MCF 10A (cell line): ENCODE measurements at regions of chr10 and their contacts with region 1.

Region 1: DNA sequence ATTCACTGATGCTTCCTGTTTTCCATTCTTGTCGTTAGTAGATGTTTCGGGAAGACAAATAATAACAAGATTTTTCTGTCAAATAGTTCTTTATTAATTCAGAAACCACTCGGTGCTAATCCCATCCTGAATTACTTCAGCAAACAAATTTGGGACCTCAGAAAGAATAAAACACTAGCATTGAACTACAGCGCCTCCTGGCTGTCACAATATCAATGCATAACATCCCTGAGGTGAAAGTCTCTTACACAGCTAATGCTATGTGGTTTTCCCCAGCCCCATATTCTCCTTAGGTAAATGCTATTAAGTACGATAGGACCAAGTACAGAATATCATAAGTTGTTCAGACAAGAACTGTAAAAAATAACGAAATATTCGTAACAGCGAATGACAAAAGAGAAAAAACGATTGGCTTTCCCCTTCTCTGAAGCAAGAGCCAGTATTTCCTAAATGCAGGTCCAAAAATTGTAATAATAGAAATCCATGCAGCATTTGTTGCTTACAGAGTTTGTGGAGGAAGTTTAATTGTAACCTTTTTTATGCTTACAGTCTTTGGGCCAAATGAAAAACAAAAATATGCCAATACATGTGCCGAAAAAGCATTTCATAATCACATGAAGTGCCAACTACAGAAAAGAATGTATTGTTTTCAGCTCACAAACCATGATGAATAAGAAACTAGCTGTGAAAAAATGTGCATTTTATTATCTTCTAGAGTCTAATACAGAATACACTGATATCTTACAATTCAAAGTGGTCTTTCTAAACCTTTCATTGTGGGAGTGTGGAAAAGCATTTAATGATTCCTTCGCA is 47.3 kb downstream of the MYPN start:
- DNase-seq: peak; percentile 80
- H3K4me3 Mint-ChIP-seq: no peak overlapping the region
- H3K27ac Mint-ChIP-seq: no peak overlapping the region
- H3K4me1 Mint-ChIP-seq: peaks cover 9% of the 10 kb centered on the region
- H3K27me3 Mint-ChIP-seq: no peaks in the 10 kb centered on the region
- CTCF ChIP-seq: peak; percentile 86

Region 2: GRCh38 chr10:67849331-67850011 is 307.1 kb before region 1 on chr10:
- CTCF ChIA-PET with region 1: interaction called, 23 read pairs
- POLR2A ChIA-PET with region 1: interaction called, 3 read pairs
- intact Hi-C with region 1: no loop called
- DNase-seq: peak; percentile 94
- H3K4me3 Mint-ChIP-seq: peak overlapping the region; percentile 88
- H3K27ac Mint-ChIP-seq: peak overlapping the region; percentile 94
- H3K4me1 Mint-ChIP-seq: no peaks in the 10 kb centered on the region
- H3K27me3 Mint-ChIP-seq: no peaks in the 10 kb centered on the region
- CTCF ChIP-seq: no peak

Region 3: GRCh38 chr10:68082872-68083271 is 73.7 kb before region 1 on chr10:
- CTCF ChIA-PET with region 1: interaction called, 182 read pairs
- POLR2A ChIA-PET with region 1: interaction called, 34 read pairs
- intact Hi-C with region 1: loop called (anchors 1 kb)
- DNase-seq: peak; percentile 51
- H3K4me3 Mint-ChIP-seq: no peak overlapping the region
- H3K27ac Mint-ChIP-seq: no peak overlapping the region
- H3K4me1 Mint-ChIP-seq: peaks cover 15% of the 10 kb centered on the region
- H3K27me3 Mint-ChIP-seq: no peaks in the 10 kb centered on the region
- CTCF ChIP-seq: peak; percentile 40

Region 4: DNA sequence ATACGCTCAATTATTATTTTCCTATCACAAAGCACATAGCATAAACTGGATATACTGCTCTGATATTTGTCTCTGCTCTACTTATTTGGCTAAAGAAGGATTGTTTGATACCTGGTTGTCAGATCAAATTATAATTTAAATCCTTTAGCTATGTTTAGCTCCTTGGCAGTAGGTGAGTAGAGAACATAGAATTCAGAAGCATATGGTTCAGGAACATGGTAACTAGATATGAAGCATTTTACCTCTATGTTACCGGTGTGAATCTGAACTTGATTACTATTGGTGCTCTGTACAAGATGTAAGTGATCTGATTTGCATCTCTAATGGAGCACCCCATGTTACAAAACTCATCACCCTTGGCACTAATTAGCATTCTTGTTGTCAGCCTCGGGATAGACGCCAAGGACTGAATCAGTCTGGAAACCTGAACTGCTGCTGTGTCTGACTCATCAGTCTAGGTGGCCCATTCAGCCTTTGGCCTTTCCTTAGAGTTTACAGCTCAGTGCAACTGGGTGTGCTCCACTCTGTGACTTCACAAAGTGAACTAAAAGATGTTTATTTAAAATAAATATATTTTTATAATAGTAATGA is 59.6 kb before region 1 on chr10:
- CTCF ChIA-PET with region 1: interaction called, 41 read pairs
- POLR2A ChIA-PET with region 1: interaction called, 17 read pairs
- intact Hi-C with region 1: loop called (anchors 1 kb)
- DNase-seq: peak; percentile 97
- H3K4me3 Mint-ChIP-seq: no peak overlapping the region
- H3K27ac Mint-ChIP-seq: no peak overlapping the region
- H3K4me1 Mint-ChIP-seq: peaks cover 21% of the 10 kb centered on the region
- H3K27me3 Mint-ChIP-seq: no peaks in the 10 kb centered on the region
- CTCF ChIP-seq: no peak

Region 5: GRCh38 chr10:68135922-68136718 is 20.5 kb before region 1 on chr10:
- CTCF ChIA-PET with region 1: interaction called, 8 read pairs
- POLR2A ChIA-PET with region 1: interaction called, 10 read pairs
- intact Hi-C with region 1: loop called (anchors 1 kb)
- DNase-seq: peak; percentile 83
- H3K4me3 Mint-ChIP-seq: peak overlapping the region; percentile 2
- H3K27ac Mint-ChIP-seq: peak overlapping the region; percentile 54
- H3K4me1 Mint-ChIP-seq: peaks cover 12% of the 10 kb centered on the region
- H3K27me3 Mint-ChIP-seq: no peaks in the 10 kb centered on the region
- CTCF ChIP-seq: no peak

Region 6: GRCh38 chr10:68271196-68271882 is 114.8 kb after region 1 on chr10:
- CTCF ChIA-PET with region 1: no interaction called
- POLR2A ChIA-PET with region 1: no interaction called
- intact Hi-C with region 1: no loop called
- DNase-seq: no peak
- H3K4me3 Mint-ChIP-seq: no peak overlapping the region
- H3K27ac Mint-ChIP-seq: no peak overlapping the region
- H3K4me1 Mint-ChIP-seq: no peaks in the 10 kb centered on the region
- H3K27me3 Mint-ChIP-seq: no peaks in the 10 kb centered on the region
- CTCF ChIP-seq: no peak

Region 7: DNA sequence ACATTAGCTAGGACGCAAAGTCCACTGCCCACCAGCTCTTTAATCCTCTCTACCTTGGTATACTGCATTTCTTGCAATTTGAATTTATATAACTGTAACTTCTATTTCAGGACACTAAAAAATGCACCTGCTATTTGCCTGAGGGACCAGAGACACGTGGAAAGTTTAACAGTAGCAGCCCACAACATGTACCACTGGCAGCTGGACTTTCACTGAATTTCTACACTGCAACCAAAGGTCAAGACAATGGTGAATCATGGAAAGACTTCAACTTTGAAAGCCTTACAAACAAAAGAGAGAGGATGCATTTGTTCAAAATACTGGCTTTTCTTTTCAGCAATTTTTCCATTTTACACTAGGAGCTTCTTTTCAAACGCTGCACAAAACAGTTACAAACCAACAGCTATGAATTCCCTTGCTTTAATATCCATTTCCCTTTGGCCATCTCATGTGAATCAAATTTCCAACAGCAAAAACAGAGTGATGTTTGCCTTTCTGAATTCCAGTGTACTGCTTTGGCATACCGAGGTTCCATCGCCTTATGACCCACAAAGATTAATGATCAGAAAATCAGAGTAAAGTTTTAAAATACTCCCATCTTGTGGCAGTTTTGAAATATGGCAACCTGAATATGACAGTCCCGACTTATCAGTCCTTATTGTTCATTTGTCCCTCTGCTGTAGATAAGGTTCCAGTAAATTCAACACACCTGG is 145.4 kb after region 1 on chr10:
- CTCF ChIA-PET with region 1: interaction called, 19 read pairs
- POLR2A ChIA-PET with region 1: interaction called, 4 read pairs
- intact Hi-C with region 1: no loop called
- DNase-seq: peak; percentile 58
- H3K4me3 Mint-ChIP-seq: no peak overlapping the region
- H3K27ac Mint-ChIP-seq: no peak overlapping the region
- H3K4me1 Mint-ChIP-seq: no peaks in the 10 kb centered on the region
- H3K27me3 Mint-ChIP-seq: no peaks in the 10 kb centered on the region
- CTCF ChIP-seq: peak; percentile 56